ENCODE measurements at regions of chr3 and their contacts with region 1.

Region 1: GRCh38 chr3:48151058-48151806 is 37.0 kb downstream of the CDC25A start:
- DNase-seq: peak; percentile 89

Region 2: GRCh38 chr3:47849699-47850563 is 301.3 kb before region 1 on chr3:
- intact Hi-C with region 1: loop called (anchors 5 to 10 kb)
- DNase-seq: no peak

Region 3: DNA sequence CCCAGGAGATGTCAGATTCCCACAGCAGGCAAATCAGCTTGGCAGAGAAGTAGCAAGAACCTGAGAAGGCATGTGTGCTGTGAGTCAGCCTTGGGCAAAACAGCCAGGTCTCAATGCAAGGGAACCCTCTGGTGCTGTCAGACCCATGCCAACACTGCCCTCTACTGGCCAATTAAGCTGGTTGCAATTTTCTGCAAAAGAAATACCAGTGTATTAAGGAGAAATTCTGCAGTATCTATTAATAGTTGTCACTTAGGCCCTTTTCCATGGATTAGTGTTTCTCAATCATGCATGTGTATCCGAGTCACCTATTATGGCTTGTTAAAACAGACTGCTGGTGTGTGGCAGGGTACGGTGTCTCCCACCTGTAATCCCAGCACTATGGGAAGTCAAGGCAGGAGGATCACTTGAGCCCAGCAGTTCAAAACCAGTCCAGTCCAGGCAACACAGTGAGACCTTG is 161.2 kb before region 1 on chr3:
- intact Hi-C with region 1: loop called in 1 of 2 experiments (anchors 10 kb)
- DNase-seq: peak; percentile 87

Region 4: GRCh38 chr3:49217688-49218470 is 1066.6 kb after region 1 on chr3:
- intact Hi-C with region 1: no loop called
- DNase-seq: no peak

Region 5: GRCh38 chr3:49647741-49648140 is 1496.5 kb after region 1 on chr3:
- intact Hi-C with region 1: no loop called
- DNase-seq: no peak